ENCODE measurements at regions of chr2 and their contacts with region 1.

Region 1: GRCh38 chr2:200811336-200812121 is at the start of gene BZW1:
- DNase-seq: peak; percentile 99
- H3K4me3 Mint-ChIP-seq: peak within 1 kb of the TSS; percentile 99
- H3K27ac Mint-ChIP-seq: peak within 1 kb of the TSS; percentile 100
- H3K4me1 Mint-ChIP-seq: peaks cover 46% of the 10 kb centered on the region
- H3K27me3 Mint-ChIP-seq: no peaks in the 10 kb centered on the region
- total RNA-seq, gene BZW1: 423 to 442 TPM

Region 2: GRCh38 chr2:200373973-200374416 is 437.5 kb before region 1 on chr2:
- CTCF ChIA-PET with region 1: no interaction called
- intact Hi-C with region 1: loop called (anchors 5 kb)
- DNase-seq: peak; percentile 66
- H3K4me3 Mint-ChIP-seq: peak overlapping the region; percentile 73
- H3K27ac Mint-ChIP-seq: peak overlapping the region; percentile 70
- H3K4me1 Mint-ChIP-seq: peaks cover 40% of the 10 kb centered on the region
- H3K27me3 Mint-ChIP-seq: no peaks in the 10 kb centered on the region

Region 3: DNA sequence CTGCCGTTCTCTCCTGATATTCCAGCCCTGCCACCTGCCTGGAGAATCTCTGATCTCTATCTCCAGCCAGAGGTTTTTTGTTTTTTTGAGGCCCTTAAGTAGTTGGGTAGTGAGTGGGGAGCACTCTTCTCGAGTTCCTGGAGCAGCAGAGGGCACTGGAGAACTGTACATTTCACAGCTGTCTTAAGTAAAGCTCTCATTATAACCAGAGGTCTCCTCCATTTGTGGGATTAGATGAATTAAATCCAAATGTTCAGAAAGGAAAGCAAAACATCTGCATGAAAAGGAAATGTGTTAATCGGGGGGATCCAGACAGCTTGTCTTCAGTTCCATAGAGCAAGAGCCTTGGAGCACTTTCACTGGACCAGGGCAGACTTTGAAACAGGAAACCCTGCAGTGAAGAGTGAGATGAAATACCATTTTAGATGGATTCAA is 192.9 kb before region 1 on chr2:
- CTCF ChIA-PET with region 1: no interaction called
- intact Hi-C with region 1: loop called (anchors 5 kb)
- DNase-seq: peak; percentile 29
- H3K4me3 Mint-ChIP-seq: no peak overlapping the region
- H3K27ac Mint-ChIP-seq: no peak overlapping the region
- H3K4me1 Mint-ChIP-seq: peaks cover 10% of the 10 kb centered on the region
- H3K27me3 Mint-ChIP-seq: no peaks in the 10 kb centered on the region

Region 4: DNA sequence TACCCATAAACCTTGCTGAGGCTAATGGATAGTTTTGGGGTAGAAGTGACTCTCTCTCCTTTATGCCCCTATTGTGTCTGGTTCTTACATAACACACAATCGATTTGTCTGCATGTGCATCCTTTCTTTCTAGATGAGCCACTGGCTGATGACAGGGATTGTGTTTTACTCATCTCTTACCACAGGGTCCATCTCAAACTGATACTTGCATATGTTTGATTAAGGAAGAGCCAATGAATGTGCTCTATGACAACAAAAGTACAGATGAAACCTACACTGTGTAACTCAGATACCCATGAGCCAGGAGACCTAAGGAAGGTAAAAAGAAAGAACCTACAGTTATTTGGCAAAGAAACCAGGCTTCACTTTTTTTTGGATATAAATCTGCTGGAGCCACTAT is 13.0 kb before region 1 on chr2:
- CTCF ChIA-PET with region 1: no interaction called
- intact Hi-C with region 1: loop called (anchors 1 kb)
- DNase-seq: no peak
- H3K4me3 Mint-ChIP-seq: no peak overlapping the region
- H3K27ac Mint-ChIP-seq: no peak overlapping the region
- H3K4me1 Mint-ChIP-seq: peaks cover 4% of the 10 kb centered on the region
- H3K27me3 Mint-ChIP-seq: no peaks in the 10 kb centered on the region

Region 5: DNA sequence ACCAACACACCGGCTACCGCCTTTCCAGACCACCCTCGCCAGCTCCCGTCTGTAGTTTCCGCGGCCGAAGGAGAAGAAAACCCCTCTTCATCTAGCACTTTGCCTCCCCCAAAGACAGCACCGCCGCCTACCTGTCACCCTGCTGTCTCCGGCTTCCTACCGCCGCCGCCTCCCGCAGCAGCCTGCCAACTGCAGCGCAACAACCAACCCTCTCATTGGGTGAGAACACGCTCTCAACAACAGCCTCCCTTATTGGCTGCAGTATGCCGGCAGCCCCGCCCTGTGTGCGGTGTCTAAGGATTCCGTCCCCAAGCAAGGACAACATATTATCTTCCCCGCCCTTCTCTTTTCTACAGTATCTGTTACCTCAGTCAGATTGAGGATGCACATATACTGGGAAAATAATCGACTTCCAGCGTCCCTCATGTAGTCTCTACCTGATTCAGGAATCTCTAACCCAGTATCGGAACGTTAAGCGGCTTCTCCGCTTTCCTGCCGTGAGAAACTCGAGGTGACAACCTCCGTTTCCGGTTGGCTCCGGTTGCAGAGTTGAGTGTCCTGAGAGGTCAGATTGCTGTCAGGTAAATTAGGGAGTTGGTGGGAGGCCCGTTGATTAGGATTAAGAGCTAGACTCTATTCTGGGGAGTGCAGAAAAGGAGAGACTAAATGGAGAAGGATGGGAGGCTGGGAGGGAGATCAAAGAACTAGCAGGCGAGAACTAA is 260.1 kb after region 1 on chr2 and contains the starts of genes HYCC2 and NDUFB3:
- CTCF ChIA-PET with region 1: interaction called, 3 read pairs
- intact Hi-C with region 1: loop called (anchors 1 kb)
- DNase-seq: peak; percentile 96
- H3K4me3 Mint-ChIP-seq: peak within 1 kb of the TSS; percentile 96
- H3K27ac Mint-ChIP-seq: peak within 1 kb of the TSS; percentile 92
- H3K4me1 Mint-ChIP-seq: peaks cover 51% of the 10 kb centered on the region
- H3K27me3 Mint-ChIP-seq: no peaks in the 10 kb centered on the region
- total RNA-seq, gene HYCC2: 19.1 TPM
- total RNA-seq, gene NDUFB3: 159 to 162 TPM

Region 6: DNA sequence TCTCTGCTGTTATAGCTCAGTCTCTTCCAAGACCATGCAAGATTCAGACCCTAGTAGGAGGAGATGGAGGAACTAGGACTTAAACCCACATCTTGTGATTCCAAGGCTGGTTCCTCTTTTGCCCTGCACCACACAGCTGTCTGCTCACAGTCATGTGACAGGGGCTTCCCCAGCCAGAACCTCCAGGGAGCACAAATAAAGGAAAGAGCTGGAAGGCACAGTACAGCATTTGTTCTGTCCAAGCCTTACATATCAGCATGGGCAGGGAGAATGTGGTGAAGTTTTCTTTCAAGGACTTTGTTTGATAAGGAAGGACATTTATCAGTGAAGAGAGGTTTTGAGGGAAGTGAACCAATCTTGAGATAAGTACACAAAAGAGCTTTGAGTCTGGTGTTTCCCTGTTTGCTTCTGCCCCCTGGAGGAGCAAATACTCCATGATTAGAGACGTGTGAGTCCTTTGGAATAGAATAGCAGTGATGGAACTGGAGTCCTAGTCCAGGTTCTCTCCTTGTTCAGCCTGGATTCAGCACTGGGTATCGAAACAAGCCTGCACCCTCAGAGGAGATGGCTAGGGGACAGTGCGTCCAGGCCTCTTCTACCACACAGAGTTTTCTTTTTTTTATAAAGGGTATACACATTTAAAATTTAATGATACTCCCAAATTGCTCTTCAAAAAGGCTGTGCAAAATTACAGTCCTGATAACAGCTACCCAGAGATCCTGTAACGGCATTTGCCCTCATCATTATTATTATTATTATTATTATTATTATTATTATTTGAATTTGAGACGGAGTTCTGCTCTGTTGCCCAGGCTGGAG is 346.8 kb after region 1 on chr2:
- CTCF ChIA-PET with region 1: no interaction called
- intact Hi-C with region 1: no loop called
- DNase-seq: peak; percentile 76
- H3K4me3 Mint-ChIP-seq: no peak overlapping the region
- H3K27ac Mint-ChIP-seq: peak overlapping the region; percentile 86
- H3K4me1 Mint-ChIP-seq: peaks cover 24% of the 10 kb centered on the region
- H3K27me3 Mint-ChIP-seq: no peaks in the 10 kb centered on the region

Region 7: DNA sequence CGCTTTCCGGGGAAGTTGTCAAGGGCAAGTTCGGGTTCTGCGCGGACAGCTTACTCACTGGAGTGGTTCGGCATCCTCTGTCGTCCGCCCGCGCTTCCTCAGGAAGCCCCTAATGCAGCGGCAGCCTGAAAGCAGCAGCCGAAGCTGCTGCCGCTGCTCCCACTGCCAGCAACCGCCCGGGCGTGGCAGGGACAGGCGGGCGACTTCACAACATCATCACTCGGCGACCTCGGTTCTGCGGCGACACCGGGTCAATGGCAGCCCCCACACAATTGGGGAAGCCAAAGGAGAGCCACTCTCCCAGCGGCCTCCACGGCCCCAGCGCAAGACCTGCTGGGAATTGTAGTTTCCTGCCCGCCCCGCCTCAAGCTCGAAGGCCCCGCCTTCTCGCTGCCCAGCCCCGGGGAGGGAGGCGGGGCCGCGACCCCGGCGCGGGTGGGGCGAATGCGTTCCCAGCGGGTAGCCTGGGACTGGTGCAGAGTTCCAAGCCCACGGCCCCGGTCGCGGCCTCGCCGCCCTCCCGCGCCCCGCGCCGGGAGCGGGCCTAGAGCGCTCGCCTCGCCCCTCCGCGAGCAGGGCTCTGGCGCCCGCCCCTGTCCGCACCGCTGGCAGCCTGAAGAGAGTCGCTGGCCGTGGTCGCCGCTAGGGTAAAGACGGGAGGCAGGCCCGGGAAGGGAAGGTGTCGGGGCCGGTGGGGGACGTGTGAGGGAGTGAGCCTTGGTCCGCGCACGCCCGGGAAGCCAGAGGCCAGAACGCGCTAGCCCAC is 639.9 kb after region 1 on chr2 and contains the starts of genes STRADB and TRAK2:
- CTCF ChIA-PET with region 1: no interaction called
- intact Hi-C with region 1: loop called (anchors 5 kb)
- DNase-seq: peak; percentile 96
- H3K4me3 Mint-ChIP-seq: peak within 1 kb of the TSS; percentile 95
- H3K27ac Mint-ChIP-seq: peak within 1 kb of the TSS; percentile 94
- H3K4me1 Mint-ChIP-seq: peaks cover 51% of the 10 kb centered on the region
- H3K27me3 Mint-ChIP-seq: no peaks in the 10 kb centered on the region
- total RNA-seq, gene STRADB: 17.6 to 19.1 TPM
- total RNA-seq, gene TRAK2: 10.4 TPM